PC-3 (cell line): ENCODE measurements at regions of chr5 and their contacts with region 1.

Region 1: GRCh38 chr5:68932830-68933434 is 160.9 kb upstream of the SLC30A5 start:
- DNase-seq: no peak
- ATAC-seq: no peak
- H3K4me3 ChIP-seq: no peak overlapping the region
- H3K27ac ChIP-seq: no peak overlapping the region
- H3K4me1 ChIP-seq: peaks cover 10% of the 10 kb centered on the region; the same call in 1 of the 2 replicates
- H3K27me3 ChIP-seq: no peaks in the 10 kb centered on the region
- CTCF ChIP-seq: no peak

Region 2: GRCh38 chr5:68898951-68899471 is 33.9 kb before region 1 on chr5:
- CTCF ChIA-PET with region 1: no interaction called
- POLR2A ChIA-PET with region 1: interaction called, 11 read pairs
- intact Hi-C with region 1: no loop called
- DNase-seq: peak; percentile 91
- ATAC-seq: peak; percentile 88
- H3K4me3 ChIP-seq: peak overlapping the region; percentile 36; the same call in 1 of the 2 replicates
- H3K27ac ChIP-seq: peak overlapping the region; percentile 81
- H3K4me1 ChIP-seq: peaks cover 20% of the 10 kb centered on the region
- H3K27me3 ChIP-seq: no peaks in the 10 kb centered on the region
- CTCF ChIP-seq: no peak